Dorsolateral prefrontal cortex (tissue), 120 donors: ENCODE measurements at regions of chr2 and their contacts with region 1.

Region 1: DNA sequence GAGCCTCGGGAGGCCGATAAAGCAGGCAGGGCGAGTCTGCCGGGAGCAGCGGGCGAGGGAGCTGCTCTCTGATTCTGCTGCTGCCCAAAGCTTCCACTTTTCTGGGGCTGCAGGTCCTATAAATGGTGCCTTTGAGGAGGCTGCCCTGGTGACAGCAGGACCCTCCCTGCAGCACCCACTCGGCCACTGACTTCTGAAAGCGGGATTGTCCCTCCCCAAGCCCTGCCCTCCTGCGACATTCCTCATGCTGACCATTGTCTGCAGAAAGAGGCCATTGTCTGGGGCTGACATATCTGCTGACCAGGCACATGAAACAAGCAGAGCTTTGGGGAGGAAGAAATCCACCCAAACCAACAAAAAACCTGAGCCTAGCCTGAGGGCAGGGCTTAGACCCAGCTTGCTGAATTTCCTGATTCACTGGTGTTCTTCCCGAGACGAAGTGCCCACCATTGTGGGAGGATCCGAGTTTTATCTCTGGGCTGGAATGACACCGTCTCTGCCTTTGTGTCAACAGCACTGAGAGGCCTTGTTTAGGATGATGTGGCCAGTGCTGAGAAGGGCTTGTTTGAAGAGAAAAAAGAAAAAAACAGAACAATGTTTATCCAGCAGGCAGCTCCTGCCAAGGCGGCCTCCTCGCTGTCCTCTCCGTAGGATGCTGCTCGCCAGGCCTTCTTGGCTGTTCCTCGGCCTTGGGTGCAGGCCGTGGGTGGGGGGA is 129.7 kb downstream of the MYCN start:
- DNase-seq: peak; percentile 23 to 96 (median 89)
- H3K4me3 ChIP-seq: peak overlapping the region in 32 of 59 donors; percentile 0 to 55 (median 30)
- H3K27ac ChIP-seq: peak overlapping the region; percentile 83 to 100 (median 96)
- H3K27me3 ChIP-seq: no peaks in the 10 kb centered on the region
- CTCF ChIP-seq: peak in 9 of 56 donors; percentile 2 to 30 (median 18)

Region 2: GRCh38 chr2:15799432-15799827 is 270.7 kb before region 1 on chr2:
- intact Hi-C with region 1: loop called in 1 of 2 experiments (anchors 5 kb)
- DNase-seq: no peak
- H3K4me3 ChIP-seq: no peak overlapping the region
- H3K27ac ChIP-seq: peak overlapping the region in 27 of 59 donors; percentile 9 to 91 (median 80)
- H3K27me3 ChIP-seq: peaks cover 0 to 5% (median 0%) of the 10 kb centered on the region in 45 donors
- CTCF ChIP-seq: no peak

Region 3: GRCh38 chr2:15927581-15928218 is 142.4 kb before region 1 on chr2:
- intact Hi-C with region 1: no loop called
- DNase-seq: no peak
- H3K4me3 ChIP-seq: no peak overlapping the region
- H3K27ac ChIP-seq: no peak overlapping the region
- H3K27me3 ChIP-seq: peaks cover 0 to 3% (median 0%) of the 10 kb centered on the region in 45 donors
- CTCF ChIP-seq: no peak

Region 4: GRCh38 chr2:16019060-16019480 is 51.0 kb before region 1 on chr2:
- intact Hi-C with region 1: loop called in 1 of 2 experiments (anchors 5 kb)
- DNase-seq: no peak
- H3K4me3 ChIP-seq: no peak overlapping the region
- H3K27ac ChIP-seq: no peak overlapping the region
- H3K27me3 ChIP-seq: peaks cover 0 to 7% (median 0%) of the 10 kb centered on the region in 45 donors
- CTCF ChIP-seq: no peak

Region 5: GRCh38 chr2:16218625-16219024 is 148.5 kb after region 1 on chr2:
- intact Hi-C with region 1: loop called in 1 of 2 experiments (anchors 10 kb)
- DNase-seq: no peak
- H3K4me3 ChIP-seq: no peak overlapping the region
- H3K27ac ChIP-seq: no peak overlapping the region
- H3K27me3 ChIP-seq: peaks cover 0 to 6% (median 0%) of the 10 kb centered on the region in 45 donors
- CTCF ChIP-seq: peak in 30 of 56 donors; percentile 10 to 53 (median 32)